ENCODE measurements at regions of chr3 and their contacts with region 1.

Region 1: DNA sequence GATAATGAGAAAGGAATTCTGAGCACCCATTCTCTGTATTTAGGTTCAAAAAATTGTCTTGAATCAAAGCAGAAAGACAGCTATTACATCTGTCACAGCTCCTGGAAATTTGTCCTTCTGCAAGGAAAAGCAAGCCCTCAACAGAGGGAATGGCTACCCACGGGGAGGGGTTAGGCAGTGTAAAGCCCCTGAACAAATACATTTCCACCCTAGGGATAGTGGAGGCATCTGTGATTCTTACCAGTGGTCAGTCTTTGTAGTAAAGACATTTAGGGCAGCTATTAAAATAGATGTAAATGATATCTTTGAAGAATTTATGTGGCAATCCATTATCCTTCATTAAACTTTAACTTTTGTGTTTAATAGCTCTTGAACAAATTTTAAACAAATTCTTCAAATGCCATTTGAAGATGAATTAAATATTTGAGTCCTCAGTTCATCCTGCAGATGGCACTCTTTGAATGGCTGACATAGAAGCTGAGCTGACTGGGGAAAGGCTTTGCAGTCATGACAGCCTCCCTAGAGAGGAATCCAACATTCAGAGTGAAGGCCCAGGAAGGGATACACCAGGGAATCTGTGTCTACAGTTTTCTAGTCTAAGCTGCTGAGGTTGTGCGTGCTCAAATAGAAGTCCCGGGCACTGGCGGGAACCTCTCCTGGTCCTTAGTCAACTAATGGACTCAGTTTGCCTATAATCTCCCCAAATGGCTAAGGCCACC is 359.7 kb upstream of the ROPN1 start:
- DNase-seq: no peak
- H3K4me3 Mint-ChIP-seq: no peak overlapping the region
- H3K27ac Mint-ChIP-seq: no peak overlapping the region
- H3K4me1 Mint-ChIP-seq: no peaks in the 10 kb centered on the region
- H3K27me3 Mint-ChIP-seq: peaks cover under 1% of the 10 kb centered on the region

Region 2: GRCh38 chr3:124467980-124468902 is 116.7 kb after region 1 on chr3:
- CTCF ChIA-PET with region 1: interaction called, 9 read pairs
- POLR2A ChIA-PET with region 1: no interaction called
- intact Hi-C with region 1: loop called (anchors 1 kb)
- DNase-seq: peak; percentile 46
- H3K4me3 Mint-ChIP-seq: no peak overlapping the region
- H3K27ac Mint-ChIP-seq: no peak overlapping the region
- H3K4me1 Mint-ChIP-seq: no peaks in the 10 kb centered on the region
- H3K27me3 Mint-ChIP-seq: peaks cover 18% of the 10 kb centered on the region

Region 3: GRCh38 chr3:124492811-124493210 is 141.2 kb after region 1 on chr3:
- CTCF ChIA-PET with region 1: no interaction called
- POLR2A ChIA-PET with region 1: no interaction called
- intact Hi-C with region 1: no loop called
- DNase-seq: peak; percentile 36
- H3K4me3 Mint-ChIP-seq: no peak overlapping the region
- H3K27ac Mint-ChIP-seq: no peak overlapping the region
- H3K4me1 Mint-ChIP-seq: peaks cover 12% of the 10 kb centered on the region
- H3K27me3 Mint-ChIP-seq: peaks cover 3% of the 10 kb centered on the region

Region 4: GRCh38 chr3:124552239-124552638 is 200.7 kb after region 1 on chr3:
- CTCF ChIA-PET with region 1: interaction called, 3 read pairs
- POLR2A ChIA-PET with region 1: no interaction called
- intact Hi-C with region 1: loop called (anchors 5 kb)
- DNase-seq: no peak
- H3K4me3 Mint-ChIP-seq: no peak overlapping the region
- H3K27ac Mint-ChIP-seq: no peak overlapping the region
- H3K4me1 Mint-ChIP-seq: peaks cover 7% of the 10 kb centered on the region
- H3K27me3 Mint-ChIP-seq: peaks cover 26% of the 10 kb centered on the region